MCF 10A (cell line): ENCODE measurements at regions of chr12 and their contacts with region 1.

Region 1: DNA sequence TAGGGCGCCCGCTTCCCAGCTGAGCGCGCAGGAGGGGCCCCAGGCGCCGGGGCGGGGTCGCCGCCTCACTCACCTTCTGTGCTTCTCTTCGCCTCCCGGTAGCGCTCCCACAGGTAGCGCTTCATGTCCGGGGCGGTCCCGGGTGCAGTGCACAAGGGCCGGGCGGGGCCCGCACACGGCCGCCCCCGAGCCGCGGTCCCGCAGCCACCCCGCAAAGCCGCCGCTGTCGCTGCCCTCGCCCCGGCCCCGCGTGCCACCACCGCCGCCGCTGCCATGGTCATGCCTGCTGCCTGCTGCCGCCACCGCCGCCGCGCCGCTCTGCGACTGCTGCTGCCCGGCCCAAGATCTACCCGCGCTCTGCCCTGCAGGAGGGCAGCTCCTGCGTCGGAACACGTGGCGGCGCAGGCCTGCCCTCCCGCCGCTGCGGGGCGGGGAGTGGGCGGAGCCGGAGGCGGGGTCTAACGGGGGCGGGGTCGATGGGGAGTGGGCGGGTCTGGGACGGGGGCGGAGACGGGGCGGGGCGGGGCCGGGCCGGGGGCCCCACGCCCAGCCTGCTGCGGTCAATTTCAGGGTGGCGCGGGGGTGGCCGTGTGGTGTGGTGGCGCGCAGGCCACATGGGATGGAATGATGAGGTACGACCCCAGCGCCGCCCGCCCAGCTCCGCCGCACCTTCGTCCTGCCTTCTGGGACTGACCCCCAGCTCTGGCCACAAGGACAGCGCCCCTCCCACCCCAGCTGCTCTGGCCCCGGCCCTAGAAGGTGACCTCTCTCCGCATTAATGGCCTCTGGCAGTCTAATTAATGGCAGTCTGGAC is at the start of gene NT5DC3:
- DNase-seq: peak; percentile 83
- H3K4me3 Mint-ChIP-seq: peak within 1 kb of the TSS; percentile 89
- H3K27ac Mint-ChIP-seq: peak within 1 kb of the TSS; percentile 76
- H3K4me1 Mint-ChIP-seq: peaks cover 25% of the 10 kb centered on the region
- H3K27me3 Mint-ChIP-seq: no peaks in the 10 kb centered on the region
- CTCF ChIP-seq: peak; percentile 13
- total RNA-seq, gene NT5DC3: 15.1 and 18.3 TPM in 2 replicates

Region 2: GRCh38 chr12:103771466-103771865 is 69.6 kb before region 1 on chr12:
- CTCF ChIA-PET with region 1: no interaction called
- POLR2A ChIA-PET with region 1: no interaction called
- intact Hi-C with region 1: loop called (anchors 2 kb)
- DNase-seq: peak; percentile 66
- H3K4me3 Mint-ChIP-seq: no peak overlapping the region
- H3K27ac Mint-ChIP-seq: no peak overlapping the region
- H3K4me1 Mint-ChIP-seq: no peaks in the 10 kb centered on the region
- H3K27me3 Mint-ChIP-seq: no peaks in the 10 kb centered on the region
- CTCF ChIP-seq: peak; percentile 33

Region 3: DNA sequence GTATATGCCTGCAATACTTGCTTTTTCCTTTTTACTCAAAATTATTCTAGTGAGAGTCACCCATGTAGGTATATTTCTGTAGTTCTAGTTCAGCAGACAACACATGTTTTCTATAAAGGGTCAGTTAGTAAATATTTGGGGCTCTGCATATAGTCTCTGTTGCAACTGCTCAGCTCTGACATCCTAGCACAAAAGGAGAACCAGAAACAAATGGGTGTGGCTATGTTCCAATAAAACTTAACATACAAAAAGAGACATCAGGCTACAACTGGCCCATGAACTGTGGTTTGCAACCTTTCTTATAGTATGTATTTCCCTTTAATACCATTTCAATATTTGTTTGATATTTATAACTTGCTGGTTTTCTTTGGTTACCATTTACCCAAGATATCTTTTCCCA is 12.0 kb before region 1 on chr12:
- CTCF ChIA-PET with region 1: interaction called, 4 read pairs
- POLR2A ChIA-PET with region 1: interaction called, 11 read pairs
- intact Hi-C with region 1: no loop called
- DNase-seq: no peak
- H3K4me3 Mint-ChIP-seq: no peak overlapping the region
- H3K27ac Mint-ChIP-seq: no peak overlapping the region
- H3K4me1 Mint-ChIP-seq: peaks cover 32% of the 10 kb centered on the region
- H3K27me3 Mint-ChIP-seq: no peaks in the 10 kb centered on the region
- CTCF ChIP-seq: no peak

Region 4: GRCh38 chr12:103868215-103868614 is 27.1 kb after region 1 on chr12:
- CTCF ChIA-PET with region 1: interaction called, 7 read pairs
- POLR2A ChIA-PET with region 1: interaction called, 16 read pairs
- intact Hi-C with region 1: no loop called
- DNase-seq: no peak
- H3K4me3 Mint-ChIP-seq: no peak overlapping the region
- H3K27ac Mint-ChIP-seq: no peak overlapping the region
- H3K4me1 Mint-ChIP-seq: no peaks in the 10 kb centered on the region
- H3K27me3 Mint-ChIP-seq: no peaks in the 10 kb centered on the region
- CTCF ChIP-seq: no peak

Region 5: GRCh38 chr12:103956516-103957027 is 115.5 kb after region 1 on chr12:
- CTCF ChIA-PET with region 1: no interaction called
- POLR2A ChIA-PET with region 1: interaction called, 12 read pairs
- intact Hi-C with region 1: no loop called
- DNase-seq: no peak
- H3K4me3 Mint-ChIP-seq: peak overlapping the region; percentile 87
- H3K27ac Mint-ChIP-seq: peak overlapping the region; percentile 93
- H3K4me1 Mint-ChIP-seq: peaks cover 28% of the 10 kb centered on the region
- H3K27me3 Mint-ChIP-seq: no peaks in the 10 kb centered on the region
- CTCF ChIP-seq: peak; percentile 5